ENCODE measurements at regions of chr9 and their contacts with region 1.

Region 1: GRCh38 chr9:96327694-96328352 is 25.8 kb upstream of the HSD17B3 start:
- DNase-seq: peak; percentile 38
- H3K4me3 ChIP-seq: no peak overlapping the region
- H3K27ac ChIP-seq: no peak overlapping the region
- H3K4me1 ChIP-seq: peaks cover 9% of the 10 kb centered on the region
- H3K27me3 ChIP-seq: no peaks in the 10 kb centered on the region
- CTCF ChIP-seq: peak; percentile 80 to 86

Region 2: DNA sequence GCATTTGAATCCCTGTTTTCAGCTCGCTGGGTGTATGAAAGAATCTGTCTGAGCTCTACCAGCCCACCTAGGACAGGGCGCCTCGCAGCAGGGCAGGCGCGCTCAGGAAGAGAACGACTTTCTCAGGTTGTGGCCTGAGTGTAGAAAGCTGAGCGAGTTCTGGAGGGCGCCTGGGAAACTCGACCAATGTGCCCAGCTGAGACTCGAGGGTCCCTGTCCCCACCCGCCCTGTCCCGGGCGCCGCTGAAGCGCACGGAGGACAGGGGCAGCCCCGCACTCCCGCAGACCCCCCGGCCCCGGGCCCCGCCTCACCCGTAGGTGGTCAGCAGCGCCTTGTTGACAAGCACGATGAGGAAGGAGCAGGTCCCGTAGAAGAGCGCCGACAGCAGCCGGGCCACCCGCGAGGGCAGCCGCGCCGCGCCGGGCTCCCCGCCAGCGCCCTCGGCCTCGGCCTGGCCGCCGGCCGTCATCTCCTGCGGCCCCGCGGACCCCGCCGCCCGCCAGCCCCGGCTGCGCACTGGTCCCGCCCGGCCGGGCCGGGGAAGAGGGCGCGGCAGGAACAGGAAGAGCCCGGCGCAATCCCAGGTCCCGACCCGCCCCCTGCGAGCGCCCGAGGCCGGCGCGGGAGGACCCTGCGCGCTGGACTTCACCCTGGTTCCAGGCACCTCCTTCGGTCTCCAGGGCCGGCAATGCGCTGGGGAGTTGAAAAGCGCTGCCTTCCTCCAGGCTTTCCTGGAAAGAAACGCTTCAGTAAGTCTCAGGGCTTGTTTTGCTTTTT is 55.5 kb after region 1 on chr9 and contains the start of gene SLC35D2:
- CTCF ChIA-PET with region 1: no interaction called
- dilution Hi-C with region 1: no loop called
- in situ Hi-C with region 1: no loop called
- intact Hi-C with region 1: loop called (anchors 2 kb)
- DNase-seq: peak; percentile 56
- H3K4me3 ChIP-seq: peak within 1 kb of the TSS; percentile 66 to 81 (median 72)
- H3K27ac ChIP-seq: peak within 1 kb of the TSS; percentile 25
- H3K4me1 ChIP-seq: peaks cover 4% of the 10 kb centered on the region
- H3K27me3 ChIP-seq: no peaks in the 10 kb centered on the region
- CTCF ChIP-seq: no peak
- total RNA-seq, gene SLC35D2: 16.7 to 20.9 TPM

Region 3: DNA sequence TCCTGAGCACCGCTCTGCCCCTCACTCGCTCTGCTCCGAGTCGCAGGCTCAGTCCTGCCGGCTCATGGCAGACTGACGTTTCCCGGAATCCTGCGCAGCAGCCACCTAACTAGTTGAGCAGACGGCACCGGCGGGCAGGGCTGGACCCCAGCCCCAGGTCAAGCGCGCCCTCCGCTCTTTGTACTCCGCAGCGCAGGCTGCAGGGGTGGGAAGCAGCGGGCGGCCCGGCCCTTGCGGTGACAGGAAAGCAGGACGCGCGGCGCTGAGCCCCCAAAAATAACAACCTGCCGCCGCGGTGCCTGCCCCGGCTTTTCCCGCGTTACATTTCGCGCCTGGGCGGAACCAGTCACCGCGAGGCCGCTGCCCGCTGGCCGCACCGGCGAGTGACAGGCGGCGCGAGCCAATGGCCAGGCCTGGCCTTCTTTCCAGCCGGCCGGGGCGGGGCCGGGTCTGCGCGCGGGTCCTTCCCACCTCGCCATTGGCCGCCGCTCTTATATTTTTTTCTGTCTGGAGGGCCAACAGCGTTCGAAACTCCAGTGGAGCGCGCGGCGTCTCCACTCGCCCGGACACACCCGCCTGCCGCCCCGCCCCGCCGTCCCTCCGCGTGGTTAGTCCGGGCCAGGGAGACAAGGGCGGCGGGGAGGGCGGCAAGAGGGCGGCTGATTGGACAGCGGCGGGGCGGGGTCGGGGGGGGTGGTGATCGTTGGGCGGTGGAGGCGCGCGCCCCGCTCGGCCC is 90.4 kb after region 1 on chr9 and contains the start of gene ZNF367:
- CTCF ChIA-PET with region 1: no interaction called
- dilution Hi-C with region 1: no loop called
- in situ Hi-C with region 1: no loop called
- intact Hi-C with region 1: loop called (anchors 2 kb)
- DNase-seq: peak; percentile 99
- H3K4me3 ChIP-seq: peak within 1 kb of the TSS; percentile 62 to 95 (median 83)
- H3K27ac ChIP-seq: peak within 1 kb of the TSS; percentile 90
- H3K4me1 ChIP-seq: peaks cover 18% of the 10 kb centered on the region
- H3K27me3 ChIP-seq: no peaks in the 10 kb centered on the region
- CTCF ChIP-seq: no peak
- total RNA-seq, gene ZNF367: 1.5 to 7.9 TPM

Region 4: DNA sequence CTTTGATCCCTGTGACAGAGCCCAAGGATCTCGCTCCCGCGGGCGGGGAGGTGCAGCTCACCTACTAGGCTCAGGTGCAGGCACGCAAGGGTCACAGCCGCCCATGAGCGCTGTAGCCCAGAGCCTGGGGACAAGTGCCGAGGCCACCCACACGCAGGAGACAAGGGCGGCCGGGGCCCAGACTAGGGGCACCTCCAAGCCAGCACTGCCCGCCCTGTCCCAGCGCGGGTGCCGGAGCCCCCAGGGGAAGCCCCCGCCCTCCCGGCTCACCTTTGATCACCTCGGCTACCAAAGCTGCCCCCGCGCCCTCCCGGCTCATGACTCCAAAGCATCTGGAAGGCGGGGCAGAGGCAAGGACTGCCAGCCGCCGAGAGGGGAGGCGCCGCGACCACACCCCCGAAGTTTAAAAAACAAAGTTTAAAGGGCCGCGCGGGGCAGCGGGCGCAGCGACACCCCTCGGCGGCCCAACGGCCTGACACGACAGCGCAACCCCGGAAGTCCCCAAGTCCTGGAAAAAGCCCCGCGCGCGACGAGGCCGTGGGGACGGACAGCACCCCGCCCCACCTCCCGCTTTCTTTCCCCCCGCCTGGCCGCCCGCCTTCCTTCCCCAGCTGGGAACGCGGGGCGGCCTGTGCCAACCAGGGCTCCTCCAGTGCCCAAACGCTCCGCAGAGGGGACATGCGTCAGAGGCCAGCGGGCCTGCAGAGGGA is 238.8 kb after region 1 on chr9:
- CTCF ChIA-PET with region 1: no interaction called
- dilution Hi-C with region 1: no loop called
- in situ Hi-C with region 1: no loop called
- intact Hi-C with region 1: loop called (anchors 5 kb)
- DNase-seq: peak; percentile 51
- H3K4me3 ChIP-seq: peak overlapping the region; percentile 69 to 96 (median 84)
- H3K27ac ChIP-seq: peak overlapping the region; percentile 35
- H3K4me1 ChIP-seq: peaks cover 16% of the 10 kb centered on the region
- H3K27me3 ChIP-seq: no peaks in the 10 kb centered on the region
- CTCF ChIP-seq: peak; percentile 17 to 69

Region 5: DNA sequence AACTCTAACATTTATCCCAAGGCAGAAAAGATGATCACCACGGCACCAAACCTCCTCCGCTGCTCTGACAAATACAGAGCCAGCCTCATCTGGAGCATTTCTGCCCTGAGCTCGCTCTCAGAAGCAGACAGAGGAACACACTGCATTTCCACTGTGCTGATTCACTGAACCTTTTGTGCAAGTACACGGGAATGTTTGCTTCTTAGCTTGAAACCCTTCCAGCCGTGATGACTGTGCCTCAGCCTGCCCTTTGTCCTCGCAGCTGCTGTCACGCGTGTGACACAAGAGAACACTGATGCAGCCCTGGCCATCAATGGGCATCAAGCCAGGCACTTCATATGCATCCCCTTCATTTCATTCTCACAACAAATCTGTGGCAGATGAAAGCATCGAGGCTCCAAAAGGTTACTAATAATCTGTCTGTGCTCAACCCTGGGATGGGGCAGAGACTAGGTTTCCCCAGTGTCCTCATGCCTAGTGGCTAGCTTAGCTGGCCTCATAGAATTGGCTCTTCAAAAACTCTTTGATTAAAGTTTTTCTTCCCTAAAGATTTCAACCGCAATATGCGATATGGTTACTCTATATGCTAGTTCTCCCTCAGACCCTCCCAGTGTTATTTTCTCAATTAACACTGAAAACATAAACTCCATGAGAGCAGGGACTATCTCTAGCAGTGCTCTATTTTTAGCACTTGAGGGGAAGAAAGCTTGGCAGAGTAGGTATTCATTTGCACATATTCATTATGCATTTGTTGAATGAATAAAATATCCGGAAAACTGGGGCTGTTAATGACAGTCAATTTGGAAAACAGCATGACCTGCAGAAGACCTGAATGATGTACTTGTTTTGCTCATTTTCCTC is 284.5 kb after region 1 on chr9:
- CTCF ChIA-PET with region 1: no interaction called
- dilution Hi-C with region 1: no loop called
- in situ Hi-C with region 1: no loop called
- intact Hi-C with region 1: no loop called
- DNase-seq: peak; percentile 69
- H3K4me3 ChIP-seq: peak overlapping the region in 1 of 3 experiments; percentile 3
- H3K27ac ChIP-seq: no peak overlapping the region
- H3K4me1 ChIP-seq: peaks cover 5% of the 10 kb centered on the region
- H3K27me3 ChIP-seq: no peaks in the 10 kb centered on the region
- CTCF ChIP-seq: no peak

Region 6: DNA sequence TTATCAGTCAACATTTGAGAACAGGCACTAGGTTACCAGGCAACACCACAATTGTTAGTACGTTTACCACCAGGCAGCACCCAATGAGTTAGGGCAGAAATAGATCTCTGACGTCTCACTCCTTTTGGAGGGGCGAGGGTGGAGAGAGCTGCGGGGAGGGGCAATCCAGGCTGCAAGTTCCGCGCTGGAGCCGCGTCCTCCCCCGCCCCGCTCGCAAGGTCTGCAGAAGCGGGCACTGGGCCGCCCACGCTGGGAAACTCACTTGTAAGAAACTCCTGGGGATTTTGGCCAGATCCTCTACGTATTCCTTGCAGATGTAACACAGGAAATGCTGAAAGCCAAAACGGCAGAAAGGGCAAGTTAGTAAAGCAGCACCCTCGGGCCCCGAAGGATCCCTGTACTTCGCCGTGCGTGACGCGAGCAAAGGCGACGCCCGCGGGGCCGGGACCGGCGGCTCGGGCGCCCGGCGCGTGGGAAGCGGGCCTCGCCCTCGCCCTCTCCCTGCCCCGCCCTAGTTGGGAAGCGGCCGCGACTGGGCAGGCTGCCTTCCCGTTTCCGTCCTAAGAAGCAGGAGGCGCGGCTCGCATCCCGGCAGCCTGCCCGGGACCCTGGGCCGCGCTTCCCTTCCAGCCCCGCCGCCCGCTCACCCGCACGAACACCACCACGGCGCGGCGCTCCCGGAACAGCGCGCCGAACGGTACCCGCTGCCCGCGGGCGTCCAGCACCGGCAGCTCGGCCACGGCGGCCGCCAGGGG is 326.8 kb after region 1 on chr9:
- CTCF ChIA-PET with region 1: no interaction called
- dilution Hi-C with region 1: no loop called
- in situ Hi-C with region 1: loop called (anchors 5 to 10 kb)
- intact Hi-C with region 1: loop called (anchors 1 kb)
- DNase-seq: peak; percentile 79
- H3K4me3 ChIP-seq: peak overlapping the region; percentile 48 to 74 (median 66)
- H3K27ac ChIP-seq: peak overlapping the region; percentile 89
- H3K4me1 ChIP-seq: peaks cover 8% of the 10 kb centered on the region
- H3K27me3 ChIP-seq: no peaks in the 10 kb centered on the region
- CTCF ChIP-seq: peak in 1 of 2 donors; percentile 21